Activated T-helper 1 cell treated with anti-CD3 and anti-CD28 coated beads, Interleukin-12 subunit alpha, Interleukin-12 subunit beta, Interleukin-2, Interleukin-4 antibody, amounts not matched to agents 30 ng/mL and 10 ng/mL and 1 ng/mL, durations not matched to agents 14 hours and 24 hours and 36 hours (primary cell): ENCODE measurements at regions of chr21 and their contacts with region 1.

Region 1: DNA sequence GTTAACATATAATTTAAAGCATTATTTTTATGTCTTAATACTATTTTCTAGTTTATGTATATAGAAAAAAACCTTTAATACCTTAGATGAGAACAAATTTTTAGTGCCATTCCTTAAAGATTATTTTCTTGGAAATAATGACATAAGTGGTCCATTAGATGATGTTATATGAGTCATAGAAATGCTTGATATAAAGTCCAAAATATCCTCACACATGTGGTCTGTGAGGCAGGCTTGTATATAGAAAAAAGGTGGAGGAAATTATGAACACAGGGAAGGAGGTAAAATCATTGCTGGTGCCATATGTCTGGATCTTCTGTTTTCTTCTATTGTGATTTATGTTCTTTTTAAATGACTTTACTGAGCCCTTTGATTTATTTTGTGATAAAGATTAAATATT is 79.3 kb downstream of the MAP3K7CL start:
- DNase-seq: no peak
- H3K4me3 Mint-ChIP-seq: no peak overlapping the region
- H3K27ac Mint-ChIP-seq: no peak overlapping the region
- H3K4me1 Mint-ChIP-seq: peaks cover 15% of the 10 kb centered on the region
- H3K27me3 Mint-ChIP-seq: no peaks in the 10 kb centered on the region

Region 2: GRCh38 chr21:29232601-29233546 is 23.2 kb after region 1 on chr21:
- intact Hi-C with region 1: loop called (anchors 2 kb)
- DNase-seq: no peak
- H3K4me3 Mint-ChIP-seq: no peak overlapping the region
- H3K27ac Mint-ChIP-seq: no peak overlapping the region
- H3K4me1 Mint-ChIP-seq: peaks cover 51% of the 10 kb centered on the region
- H3K27me3 Mint-ChIP-seq: peaks cover 30% of the 10 kb centered on the region